Spleen (tissue), 13 donors: ENCODE measurements at regions of chr16 and their contacts with region 1.

Region 1: GRCh38 chr16:83878838-83879237 is 20.1 kb upstream of the MLYCD start:
- DNase-seq: no peak
- H3K4me3 ChIP-seq: no peak overlapping the region
- H3K27ac ChIP-seq: no peak overlapping the region
- H3K4me1 ChIP-seq: no peaks in the 10 kb centered on the region
- H3K27me3 ChIP-seq: peaks cover 0 to 36% (median 0%) of the 10 kb centered on the region in 7 donors
- CTCF ChIP-seq: peak in 6 of 11 experiments; percentile 25 to 48 (median 34)
- POLR2A ChIP-seq: no peak

Region 2: GRCh38 chr16:83826146-83826913 is 52.5 kb before region 1 on chr16:
- intact Hi-C with region 1: loop called (anchors 5 kb)
- DNase-seq: peak; percentile 94
- H3K4me3 ChIP-seq: no peak overlapping the region
- H3K27ac ChIP-seq: no peak overlapping the region
- H3K4me1 ChIP-seq: peaks cover 0 to 8% (median 5%) of the 10 kb centered on the region in 6 donors
- H3K27me3 ChIP-seq: peaks cover 0 to under 1% (median 0%) of the 10 kb centered on the region in 7 donors
- CTCF ChIP-seq: peak; percentile 72 to 96 (median 92)
- POLR2A ChIP-seq: no peak

Region 3: DNA sequence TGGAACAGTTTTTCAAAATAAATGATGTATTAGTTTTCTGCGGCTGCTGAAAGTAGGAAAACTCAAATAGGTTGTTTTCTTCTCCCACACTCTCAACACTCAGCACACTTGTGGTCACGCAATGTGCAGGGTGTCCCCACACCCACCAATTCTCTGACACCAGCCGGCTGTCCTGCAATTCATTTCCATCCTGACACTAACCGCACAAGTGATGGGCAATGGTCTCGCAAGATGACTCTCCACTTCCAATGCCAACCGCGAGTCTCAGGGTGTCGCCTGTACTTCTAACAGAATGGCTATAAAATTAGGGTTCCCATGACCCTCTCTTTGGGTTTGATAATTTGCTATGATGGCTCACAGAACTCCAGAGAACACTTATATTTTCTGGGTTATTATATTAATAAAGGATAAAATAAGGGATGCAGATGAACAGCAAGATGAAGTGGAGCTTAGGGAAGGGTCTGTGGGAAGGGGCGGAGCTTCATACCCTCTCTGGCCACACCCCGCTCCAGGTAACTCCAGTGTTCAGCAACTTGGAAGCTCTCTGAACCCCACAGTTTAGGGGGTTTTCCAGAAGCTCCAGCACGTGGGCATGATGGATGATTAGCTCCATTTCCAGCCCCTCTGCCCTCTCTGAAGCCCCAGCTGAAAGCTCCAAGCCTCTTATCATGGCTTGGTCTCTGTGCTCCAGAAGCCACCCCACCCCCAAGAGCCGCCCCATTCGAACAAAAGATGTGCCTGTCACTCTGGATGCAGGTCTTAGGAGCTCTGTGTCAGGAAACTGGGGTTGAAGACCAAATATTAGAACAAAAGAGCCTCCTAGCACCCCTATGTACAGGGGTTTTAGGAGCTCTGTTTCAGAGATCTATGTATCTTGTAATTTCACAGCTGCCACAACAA is 288.2 kb after region 1 on chr16:
- intact Hi-C with region 1: no loop called
- DNase-seq: peak; percentile 47
- H3K4me3 ChIP-seq: no peak overlapping the region
- H3K27ac ChIP-seq: no peak overlapping the region
- H3K4me1 ChIP-seq: no peaks in the 10 kb centered on the region
- H3K27me3 ChIP-seq: peaks cover 0 to 44% (median 5%) of the 10 kb centered on the region in 7 donors
- CTCF ChIP-seq: no peak
- POLR2A ChIP-seq: no peak